Upper lobe of right lung (tissue), 1 donor: ENCODE measurements at regions of chr3 and their contacts with region 1.

Region 1: GRCh38 chr3:17243621-17244020 is 358.9 kb downstream of the PLCL2 start:
- DNase-seq: no peak
- ATAC-seq: no peak
- H3K4me3 ChIP-seq: no peak overlapping the region
- H3K27ac ChIP-seq: no peak overlapping the region
- H3K4me1 ChIP-seq: no peaks in the 10 kb centered on the region
- H3K27me3 ChIP-seq: no peaks in the 10 kb centered on the region
- CTCF ChIP-seq: no peak

Region 2: DNA sequence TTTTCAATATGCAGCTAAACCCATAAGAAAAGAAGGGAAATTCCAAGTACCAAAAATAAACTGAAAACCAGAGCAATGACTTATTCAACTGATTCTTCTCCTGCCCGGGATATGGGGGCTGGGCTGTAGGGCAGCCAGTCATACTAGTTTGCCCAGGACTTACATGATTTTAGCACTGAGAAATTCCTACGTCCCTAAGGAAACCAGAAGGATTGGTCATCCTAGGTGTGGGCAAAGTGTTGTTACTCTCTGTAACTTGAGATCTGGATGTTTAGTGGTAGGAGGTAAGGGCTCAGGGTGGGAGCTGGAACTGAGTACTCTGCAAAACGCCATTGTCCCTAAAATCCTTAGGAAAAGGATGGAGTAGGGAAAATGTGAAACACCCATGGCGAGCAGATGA is 637.2 kb before region 1 on chr3:
- intact Hi-C with region 1: loop called (anchors 5 kb)
- DNase-seq: no peak
- ATAC-seq: no peak
- H3K4me3 ChIP-seq: no peak overlapping the region
- H3K27ac ChIP-seq: no peak overlapping the region
- H3K4me1 ChIP-seq: no peaks in the 10 kb centered on the region
- H3K27me3 ChIP-seq: no peaks in the 10 kb centered on the region
- CTCF ChIP-seq: no peak